ENCODE measurements at regions of chr21 and their contacts with region 1.

Region 1: GRCh38 chr21:37366482-37367316 is at the start of gene DYRK1A:
- DNase-seq: peak; percentile 99
- ATAC-seq: peak; percentile 96
- total RNA-seq, gene DYRK1A: 63.5 TPM

Region 2: DNA sequence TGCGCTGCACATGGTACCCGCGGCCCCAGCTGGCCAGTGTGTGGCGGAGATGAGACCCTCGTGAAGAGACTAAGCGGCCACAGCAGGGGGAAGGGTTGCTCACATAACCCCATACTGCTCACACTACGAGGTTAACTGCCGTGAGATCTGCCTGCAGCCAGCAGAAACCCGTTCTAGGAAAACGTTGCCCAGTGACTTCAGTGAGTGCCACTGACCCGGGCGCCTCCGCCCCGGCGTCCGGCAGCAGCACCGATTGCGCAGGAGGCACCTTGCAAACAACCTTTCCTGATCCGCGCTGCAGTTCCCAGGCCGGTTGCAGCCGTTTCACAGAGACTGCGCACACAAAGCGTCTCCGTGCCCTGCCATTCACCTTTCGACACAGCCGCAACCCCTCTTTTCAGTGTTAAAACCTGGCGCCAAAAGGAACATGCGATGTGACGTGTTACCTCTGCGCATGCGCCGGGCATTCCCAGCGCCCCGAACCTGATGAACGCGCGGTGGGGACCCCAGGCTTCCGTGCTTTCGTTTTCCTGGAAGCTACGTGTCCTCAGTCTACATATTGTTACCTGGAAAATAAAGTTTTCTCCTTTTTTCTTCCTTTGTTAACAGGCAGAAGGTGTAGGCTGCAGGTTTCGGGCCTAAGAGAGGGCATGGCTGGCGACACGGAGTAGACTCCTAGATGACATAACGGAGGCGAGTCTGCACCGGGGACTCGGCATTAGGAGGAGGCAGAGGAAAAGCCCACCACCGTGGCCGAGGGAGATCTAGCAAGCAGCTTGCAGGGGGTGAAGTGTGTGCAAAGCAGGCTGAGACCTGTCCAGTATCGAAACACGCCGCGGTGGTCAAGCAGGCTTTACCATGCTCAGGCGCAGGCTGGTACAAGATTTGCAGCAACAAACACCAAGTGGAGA is 108.5 kb before region 1 on chr21:
- intact Hi-C with region 1: loop called (anchors 2 kb)
- DNase-seq: peak; percentile 76
- ATAC-seq: peak; percentile 53

Region 3: GRCh38 chr21:37338671-37339551 is 27.8 kb before region 1 on chr21:
- intact Hi-C with region 1: loop called (anchors 2 kb)
- DNase-seq: peak; percentile 60
- ATAC-seq: peak; percentile 93

Region 4: DNA sequence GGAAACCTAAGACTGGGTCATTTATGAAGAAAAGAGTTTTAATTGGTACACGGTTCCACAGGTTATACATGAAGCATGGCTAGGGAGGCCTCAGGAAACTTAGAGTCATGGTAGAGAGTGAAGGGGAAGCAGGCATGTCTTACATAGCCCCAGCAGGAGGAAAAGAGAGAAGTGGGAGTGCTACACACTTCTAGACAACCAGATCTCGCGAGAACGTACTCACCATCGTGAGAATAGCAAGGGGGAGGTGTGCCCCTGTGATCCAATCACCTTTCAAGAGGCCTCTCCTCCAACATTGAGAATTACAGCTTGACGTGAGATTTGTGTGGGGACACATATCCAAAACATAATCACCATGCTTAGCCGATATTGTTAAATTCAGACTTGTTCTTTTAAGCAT is 62.7 kb after region 1 on chr21:
- intact Hi-C with region 1: loop called (anchors 5 kb)
- DNase-seq: no peak
- ATAC-seq: no peak

Region 5: DNA sequence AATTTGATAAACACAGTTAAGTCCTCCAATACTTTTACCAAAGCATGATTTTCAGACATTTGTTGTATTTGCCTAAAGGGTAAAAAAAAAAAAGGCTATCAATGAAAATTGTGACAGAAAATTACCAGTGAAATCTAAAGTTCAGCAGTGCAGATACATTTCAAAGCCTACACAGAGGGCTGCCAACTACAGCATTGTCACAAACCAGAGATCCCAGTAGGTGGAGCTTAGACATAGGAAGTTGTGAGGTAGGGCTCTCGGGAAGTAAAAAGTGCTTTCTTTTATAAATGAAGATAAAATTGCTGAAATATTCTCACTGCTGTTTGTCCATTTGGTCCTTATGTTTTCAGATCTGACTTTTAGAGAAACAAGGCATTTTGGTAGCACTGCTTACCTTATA is 122.9 kb after region 1 on chr21:
- intact Hi-C with region 1: no loop called
- DNase-seq: no peak
- ATAC-seq: peak; percentile 58

Region 6: GRCh38 chr21:37555672-37556261 is 189.1 kb after region 1 on chr21:
- intact Hi-C with region 1: loop called (anchors 1 kb)
- DNase-seq: no peak
- ATAC-seq: peak; percentile 73